GM13976 (cell line): ENCODE measurements at regions of chr4 and their contacts with region 1.

Region 1: DNA sequence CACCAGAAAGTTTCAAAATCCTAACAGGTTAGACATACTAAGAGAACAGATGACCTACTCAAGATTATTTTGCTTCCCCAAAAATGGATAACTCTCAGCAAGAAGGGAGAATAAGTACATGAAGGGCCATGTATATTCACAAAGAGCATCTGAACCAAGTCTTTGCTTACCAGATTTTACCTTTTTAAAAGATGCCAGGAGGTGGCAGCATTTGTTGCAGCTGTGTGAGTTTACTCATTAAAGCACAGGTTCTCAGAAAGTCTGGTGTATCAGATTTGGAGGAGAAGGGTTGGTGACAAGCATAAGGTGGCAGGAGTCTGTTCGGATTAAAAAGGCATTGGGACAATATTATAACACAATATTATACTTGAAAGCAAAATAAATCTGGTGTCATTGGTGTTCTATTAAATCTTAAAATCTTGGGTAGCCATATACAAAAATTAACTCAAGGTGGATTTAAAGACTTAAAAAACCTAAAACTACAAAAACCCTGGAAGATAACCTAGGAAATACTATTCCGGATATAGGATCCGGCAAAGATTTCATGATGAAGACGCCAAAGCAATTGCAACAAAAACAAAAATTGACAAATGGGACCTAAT is 51.3 kb upstream of the NFKB1 start:
- DNase-seq: peak; percentile 67
- CTCF ChIP-seq: peak; percentile 57

Region 2: DNA sequence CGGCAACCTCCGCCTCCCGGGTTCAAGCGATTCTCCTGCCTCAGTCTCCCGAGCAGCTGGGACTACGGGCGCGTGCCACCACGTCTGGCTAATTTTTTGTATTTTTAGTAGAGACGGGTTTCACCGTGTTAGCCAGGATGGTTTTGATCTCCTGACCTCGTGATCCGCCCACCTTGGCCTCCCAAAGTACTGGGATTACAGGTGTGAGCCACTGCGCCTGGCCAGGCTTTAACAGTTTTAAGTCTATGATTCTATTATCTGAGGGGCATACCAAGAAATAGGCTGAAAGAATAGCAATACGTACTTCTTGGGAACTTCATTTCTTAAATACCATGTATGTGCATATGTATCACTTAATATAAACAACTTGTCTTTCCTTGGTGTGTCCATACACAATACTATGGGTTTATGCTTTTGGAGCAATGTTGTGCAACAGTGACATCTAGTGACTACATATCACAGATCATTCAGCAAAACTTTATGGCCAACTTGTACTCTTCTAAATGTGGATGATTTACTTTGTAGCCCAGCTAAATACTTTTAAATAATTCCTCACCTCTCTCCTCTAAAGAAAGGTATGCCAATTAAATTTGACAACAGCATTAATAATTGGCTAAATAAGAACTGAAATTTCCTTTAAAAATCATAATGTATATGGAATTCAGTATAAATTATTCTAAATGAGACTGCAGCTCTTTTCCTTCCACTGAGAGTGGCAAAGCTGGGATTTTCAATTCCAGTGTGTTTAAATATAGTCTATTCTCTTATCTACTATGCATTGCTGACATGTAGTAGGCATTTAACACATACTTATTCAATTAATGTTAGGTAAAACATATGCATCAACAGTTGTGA is 559.2 kb after region 1 on chr4:
- in situ Hi-C with region 1: loop called (anchors 10 kb)
- DNase-seq: peak; percentile 64
- CTCF ChIP-seq: peak; percentile 29

Region 3: DNA sequence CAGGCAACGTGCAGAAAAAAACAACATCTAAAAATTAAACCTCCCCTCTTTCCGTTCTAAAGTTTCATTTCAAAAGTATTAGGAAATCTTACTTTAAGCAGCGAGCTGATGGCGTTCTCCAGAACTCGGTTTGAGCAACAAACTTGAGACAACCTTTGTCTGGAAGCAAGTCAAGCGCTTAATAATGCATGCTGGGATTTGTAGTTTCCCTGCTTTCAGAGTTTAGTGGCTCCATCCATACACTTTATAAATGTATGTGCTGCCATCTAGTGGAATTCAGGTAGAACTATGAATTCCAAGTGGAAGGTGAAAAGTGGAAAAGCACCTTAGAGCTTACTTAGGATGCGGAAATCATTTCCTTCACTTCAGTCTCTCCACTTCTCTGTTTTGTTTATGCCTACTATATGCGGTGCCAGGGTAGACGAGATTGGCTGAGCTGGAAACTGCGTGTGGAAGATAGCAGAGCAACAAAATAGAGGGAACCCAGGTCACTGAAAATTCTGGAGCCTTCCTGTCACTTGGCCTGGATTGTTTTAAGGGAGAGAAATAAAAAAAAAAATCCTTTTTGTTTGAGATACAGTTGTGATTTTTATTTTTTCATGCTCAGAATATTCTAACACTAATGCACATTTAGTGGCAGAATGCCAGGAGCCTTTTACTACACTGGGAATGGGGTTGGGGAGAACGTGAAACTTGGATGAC is 650.0 kb after region 1 on chr4 and contains the start of gene BDH2:
- in situ Hi-C with region 1: loop called (anchors 10 kb)
- DNase-seq: peak; percentile 78
- CTCF ChIP-seq: peak; percentile 66